Activated naive CD4-positive, alpha-beta T cell treated with anti-CD3 and anti-CD28 coated beads for 36 hours (primary cell): ENCODE measurements at regions of chr6 and their contacts with region 1.

Region 1: GRCh38 chr6:111472933-111473435 is 10.0 kb downstream of the REV3L start:
- DNase-seq: no peak
- H3K4me3 Mint-ChIP-seq: no peak overlapping the region
- H3K27ac Mint-ChIP-seq: no peak overlapping the region
- H3K4me1 Mint-ChIP-seq: peaks cover 36% of the 10 kb centered on the region
- H3K27me3 Mint-ChIP-seq: no peaks in the 10 kb centered on the region

Region 2: GRCh38 chr6:111338843-111339242 is 134.1 kb before region 1 on chr6:
- CTCF ChIA-PET with region 1: interaction called, 4 read pairs
- intact Hi-C with region 1: loop called (anchors 2 kb)
- DNase-seq: no peak
- H3K4me3 Mint-ChIP-seq: no peak overlapping the region
- H3K27ac Mint-ChIP-seq: no peak overlapping the region
- H3K4me1 Mint-ChIP-seq: peaks cover 22% of the 10 kb centered on the region
- H3K27me3 Mint-ChIP-seq: no peaks in the 10 kb centered on the region

Region 3: GRCh38 chr6:111597687-111598086 is 124.7 kb after region 1 on chr6:
- CTCF ChIA-PET with region 1: no interaction called
- intact Hi-C with region 1: no loop called
- DNase-seq: no peak
- H3K4me3 Mint-ChIP-seq: no peak overlapping the region
- H3K27ac Mint-ChIP-seq: no peak overlapping the region
- H3K4me1 Mint-ChIP-seq: peaks cover 12% of the 10 kb centered on the region
- H3K27me3 Mint-ChIP-seq: no peaks in the 10 kb centered on the region